ENCODE measurements at regions of chr19 and their contacts with region 1.

Region 1: GRCh38 chr19:30046522-30046921 is 104.5 kb downstream of the URI1 start:
- DNase-seq: peak in 1 of 2 experiments; percentile 48
- ATAC-seq: peak; percentile 72 to 80
- H3K4me3 ChIP-seq: no peak overlapping the region
- H3K27ac ChIP-seq: no peak overlapping the region
- H3K4me1 ChIP-seq: no peaks in the 10 kb centered on the region
- CTCF ChIP-seq: peak; percentile 67
- EP300 ChIP-seq: no peak
- POLR2A ChIP-seq: no peak
- RAD21 ChIP-seq: peak; percentile 62 to 64

Region 2: GRCh38 chr19:30029721-30030510 is 16.6 kb before region 1 on chr19:
- CTCF ChIA-PET with region 1: interaction called, 18 read pairs
- POLR2A ChIA-PET with region 1: no interaction called
- DNase-seq: peak in 1 of 2 experiments; percentile 54
- ATAC-seq: peak; percentile 64 to 69
- H3K4me3 ChIP-seq: no peak overlapping the region
- H3K27ac ChIP-seq: no peak overlapping the region
- H3K4me1 ChIP-seq: peaks cover 14% of the 10 kb centered on the region
- CTCF ChIP-seq: no peak
- EP300 ChIP-seq: no peak
- POLR2A ChIP-seq: no peak
- RAD21 ChIP-seq: no peak

Region 3: GRCh38 chr19:30036191-30037129 is 10.1 kb before region 1 on chr19:
- CTCF ChIA-PET with region 1: interaction called, 18 read pairs
- POLR2A ChIA-PET with region 1: no interaction called
- DNase-seq: no peak
- ATAC-seq: no peak
- H3K4me3 ChIP-seq: no peak overlapping the region
- H3K27ac ChIP-seq: no peak overlapping the region
- H3K4me1 ChIP-seq: no peaks in the 10 kb centered on the region
- CTCF ChIP-seq: no peak
- EP300 ChIP-seq: no peak
- POLR2A ChIP-seq: no peak
- RAD21 ChIP-seq: no peak

Region 4: GRCh38 chr19:30060531-30061222 is 14.2 kb after region 1 on chr19:
- CTCF ChIA-PET with region 1: interaction called, 15 read pairs
- POLR2A ChIA-PET with region 1: no interaction called
- DNase-seq: no peak
- ATAC-seq: peak in 1 of 2 experiments; percentile 13; a peak in 2 of 6 replicates
- H3K4me3 ChIP-seq: no peak overlapping the region
- H3K27ac ChIP-seq: no peak overlapping the region
- H3K4me1 ChIP-seq: no peaks in the 10 kb centered on the region
- CTCF ChIP-seq: no peak
- EP300 ChIP-seq: no peak
- POLR2A ChIP-seq: no peak
- RAD21 ChIP-seq: no peak

Measured in A549 (cell line).